A549 (cell line): ENCODE measurements at regions of chr19 and their contacts with region 1.

Region 1: GRCh38 chr19:42254989-42255765 is at the start of gene ERF:
- DNase-seq: peak; percentile 96 to 98
- ATAC-seq: peak; percentile 48 to 72
- H3K4me3 ChIP-seq: peak within 1 kb of the TSS; percentile 94
- H3K27ac ChIP-seq: peak within 1 kb of the TSS; percentile 94 to 96
- H3K4me1 ChIP-seq: peaks cover 46% of the 10 kb centered on the region
- CTCF ChIP-seq: no peak
- EP300 ChIP-seq: no peak; a peak in 1 of 5 replicates
- POLR2A ChIP-seq: peak; percentile 96
- RAD21 ChIP-seq: no peak
- polyA plus RNA-seq, gene ERF: 71.9 and 103 TPM in 2 replicates

Region 2: GRCh38 chr19:42229855-42230351 is 25.3 kb before region 1 on chr19:
- CTCF ChIA-PET with region 1: interaction called, 10 read pairs
- POLR2A ChIA-PET with region 1: interaction called, 7 read pairs
- DNase-seq: peak in 1 of 2 experiments; percentile 65
- ATAC-seq: peak; percentile 36 to 56; a peak in 5 of 6 replicates
- H3K4me3 ChIP-seq: no peak overlapping the region
- H3K27ac ChIP-seq: peak overlapping the region in 1 of 2 experiments; percentile 29; a peak in 3 of 6 replicates
- H3K4me1 ChIP-seq: peaks cover 11% of the 10 kb centered on the region; the same call in 2 of the 3 replicates
- CTCF ChIP-seq: no peak
- EP300 ChIP-seq: no peak
- POLR2A ChIP-seq: no peak
- RAD21 ChIP-seq: no peak

Region 3: GRCh38 chr19:42268704-42269477 is 13.7 kb after region 1 on chr19 and contains the start of gene CIC:
- CTCF ChIA-PET with region 1: interaction called, 373 read pairs
- POLR2A ChIA-PET with region 1: interaction called, 12 read pairs
- DNase-seq: peak; percentile 100
- ATAC-seq: peak; percentile 80 to 93
- H3K4me3 ChIP-seq: peak within 1 kb of the TSS; percentile 58
- H3K27ac ChIP-seq: peak within 1 kb of the TSS; percentile 87 to 94
- H3K4me1 ChIP-seq: peaks cover 28% of the 10 kb centered on the region
- CTCF ChIP-seq: no peak
- EP300 ChIP-seq: no peak; a peak in 1 of 5 replicates
- POLR2A ChIP-seq: no peak
- RAD21 ChIP-seq: no peak
- polyA plus RNA-seq, gene CIC: 7.2 and 7.7 TPM in 2 replicates

Region 4: DNA sequence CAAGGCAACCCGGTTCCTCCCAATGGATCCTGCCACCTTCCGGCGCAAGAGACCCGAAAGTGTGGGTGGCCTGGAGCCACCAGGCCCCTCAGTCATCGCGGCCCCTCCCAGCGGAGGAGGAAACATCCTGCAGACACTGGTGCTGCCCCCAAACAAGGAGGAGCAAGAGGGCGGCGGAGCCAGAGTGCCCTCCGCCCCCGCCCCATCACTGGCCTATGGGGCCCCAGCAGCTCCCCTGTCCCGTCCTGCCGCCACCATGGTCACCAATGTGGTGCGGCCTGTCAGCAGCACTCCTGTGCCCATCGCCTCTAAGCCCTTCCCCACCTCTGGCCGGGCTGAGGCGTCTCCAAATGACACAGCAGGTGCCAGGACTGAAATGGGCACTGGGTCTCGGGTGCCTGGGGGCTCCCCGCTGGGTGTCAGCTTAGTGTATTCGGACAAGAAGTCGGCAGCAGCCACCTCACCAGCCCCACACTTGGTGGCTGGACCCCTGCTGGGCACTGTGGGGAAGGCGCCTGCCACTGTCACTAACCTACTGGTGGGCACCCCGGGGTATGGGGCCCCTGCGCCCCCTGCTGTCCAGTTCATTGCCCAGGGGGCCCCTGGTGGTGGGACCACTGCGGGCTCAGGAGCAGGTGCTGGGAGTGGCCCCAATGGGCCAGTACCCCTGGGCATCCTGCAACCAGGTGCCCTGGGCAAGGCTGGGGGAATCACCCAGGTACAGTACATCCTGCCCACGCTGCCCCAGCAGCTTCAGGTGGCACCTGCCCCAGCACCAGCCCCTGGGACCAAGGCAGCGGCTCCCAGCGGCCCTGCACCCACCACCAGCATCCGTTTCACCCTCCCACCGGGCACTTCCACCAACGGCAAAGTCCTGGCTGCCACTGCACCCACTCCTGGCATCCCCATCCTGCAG is 35.6 kb after region 1 on chr19:
- CTCF ChIA-PET with region 1: interaction called, 616 read pairs
- POLR2A ChIA-PET with region 1: no interaction called
- DNase-seq: peak; percentile 79 to 95
- ATAC-seq: peak; percentile 48 to 83
- H3K4me3 ChIP-seq: no peak overlapping the region
- H3K27ac ChIP-seq: no peak overlapping the region
- H3K4me1 ChIP-seq: peaks cover 16% of the 10 kb centered on the region
- CTCF ChIP-seq: peak; percentile 88
- EP300 ChIP-seq: no peak
- POLR2A ChIP-seq: no peak; the same call in 1 of the 2 replicates
- RAD21 ChIP-seq: peak; percentile 76 to 78; a peak in 4 of 5 replicates